ENCODE measurements at regions of chr6 and their contacts with region 1.

Region 1: DNA sequence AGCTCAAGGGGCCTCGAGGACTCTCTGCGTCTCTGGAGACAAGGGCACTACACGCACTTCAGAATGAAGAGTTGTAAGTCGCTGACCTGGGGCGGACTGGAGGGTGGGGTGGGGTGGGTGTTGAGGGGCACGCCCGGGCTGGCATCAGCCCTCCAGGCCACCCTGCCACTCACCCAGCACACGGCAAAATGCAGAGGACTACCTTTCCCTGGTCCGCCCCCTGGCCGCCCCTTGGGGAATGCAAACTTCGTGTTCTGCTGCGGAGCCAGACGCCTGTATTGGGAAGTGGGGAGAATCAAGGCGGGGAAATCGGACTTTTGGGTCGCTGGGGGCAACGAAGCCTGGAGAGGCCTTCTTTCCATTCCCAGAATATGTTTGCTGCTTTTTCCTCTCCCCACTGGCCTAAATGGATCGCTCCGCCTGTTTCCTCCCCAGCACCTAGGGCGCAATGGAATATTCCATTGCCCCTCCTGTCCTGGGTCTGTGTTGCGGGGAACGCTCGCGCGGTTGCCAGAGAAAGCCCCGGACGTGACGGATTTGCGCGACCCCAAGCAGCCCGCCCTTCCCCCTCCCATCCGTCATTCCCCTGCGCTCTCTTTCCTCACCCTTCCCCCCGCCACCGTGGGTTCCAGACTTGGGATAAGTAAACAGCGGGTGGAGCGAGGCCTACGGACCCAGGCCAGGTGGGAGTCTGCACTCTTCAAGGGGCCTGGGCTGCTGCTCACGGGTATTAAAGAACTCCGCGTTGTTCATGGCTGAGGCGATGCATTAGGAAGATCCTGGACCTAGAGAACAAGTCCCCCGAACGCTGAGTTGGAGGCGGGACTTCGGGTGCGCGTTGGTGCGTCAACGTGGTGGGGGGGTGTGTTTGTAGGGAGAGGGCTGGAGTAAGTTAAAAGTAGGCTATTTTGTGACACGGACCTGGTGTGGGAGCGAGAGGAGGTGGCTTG is at the start of gene PPT2:
- DNase-seq: peak; percentile 94
- ATAC-seq: peak; percentile 88 to 91
- total RNA-seq, gene PPT2: 20.2 to 29.6 TPM

Region 2: DNA sequence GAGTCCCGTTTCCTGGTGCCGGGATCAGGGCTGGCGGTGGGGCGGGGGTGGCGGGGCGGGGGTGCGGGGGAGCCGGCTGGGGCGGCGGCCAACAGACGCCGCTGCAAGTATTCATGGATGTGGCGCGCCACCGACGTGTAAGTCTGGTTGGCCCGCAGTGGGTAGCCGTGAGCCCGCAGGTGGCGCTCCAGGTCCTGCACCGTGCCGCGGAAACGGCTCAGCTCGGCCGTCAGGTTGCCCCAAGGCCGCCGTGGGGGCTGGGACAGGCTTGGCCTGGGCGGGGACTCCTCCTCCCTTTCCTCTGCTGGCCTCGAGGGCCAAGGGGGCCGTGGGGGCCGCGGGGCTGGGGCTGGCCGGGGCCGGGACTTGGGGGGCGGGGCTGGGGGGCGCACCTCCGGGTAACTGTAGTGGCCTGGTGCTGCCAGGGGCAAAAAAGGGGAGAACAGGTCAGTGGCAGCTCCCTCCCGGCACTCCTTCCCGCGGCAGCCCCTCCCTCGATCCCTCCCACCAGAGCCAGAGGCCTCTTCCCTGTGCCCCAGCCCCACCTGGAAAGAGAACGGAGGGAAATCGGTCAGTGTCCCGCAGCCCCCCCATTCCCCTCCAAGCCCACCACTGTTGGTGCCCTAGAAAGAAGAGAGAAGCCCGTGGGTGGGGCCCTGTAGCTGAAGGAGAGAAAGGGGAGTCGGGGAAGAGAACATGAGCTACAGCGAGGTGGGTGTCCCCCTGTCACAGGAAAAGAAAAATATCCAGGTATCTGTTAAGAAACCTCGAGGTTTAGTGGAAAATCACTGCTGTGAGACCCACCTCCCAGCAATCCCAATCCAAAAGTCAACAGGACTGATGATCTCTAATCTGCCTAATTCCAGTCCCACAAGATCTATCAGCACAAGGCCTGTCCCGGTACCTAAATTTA is 66.0 kb before region 1 on chr6:
- intact Hi-C with region 1: loop called in 1 of 2 experiments (anchors 2 kb)
- DNase-seq: peak; percentile 93
- ATAC-seq: peak; percentile 86 to 92

Region 3: DNA sequence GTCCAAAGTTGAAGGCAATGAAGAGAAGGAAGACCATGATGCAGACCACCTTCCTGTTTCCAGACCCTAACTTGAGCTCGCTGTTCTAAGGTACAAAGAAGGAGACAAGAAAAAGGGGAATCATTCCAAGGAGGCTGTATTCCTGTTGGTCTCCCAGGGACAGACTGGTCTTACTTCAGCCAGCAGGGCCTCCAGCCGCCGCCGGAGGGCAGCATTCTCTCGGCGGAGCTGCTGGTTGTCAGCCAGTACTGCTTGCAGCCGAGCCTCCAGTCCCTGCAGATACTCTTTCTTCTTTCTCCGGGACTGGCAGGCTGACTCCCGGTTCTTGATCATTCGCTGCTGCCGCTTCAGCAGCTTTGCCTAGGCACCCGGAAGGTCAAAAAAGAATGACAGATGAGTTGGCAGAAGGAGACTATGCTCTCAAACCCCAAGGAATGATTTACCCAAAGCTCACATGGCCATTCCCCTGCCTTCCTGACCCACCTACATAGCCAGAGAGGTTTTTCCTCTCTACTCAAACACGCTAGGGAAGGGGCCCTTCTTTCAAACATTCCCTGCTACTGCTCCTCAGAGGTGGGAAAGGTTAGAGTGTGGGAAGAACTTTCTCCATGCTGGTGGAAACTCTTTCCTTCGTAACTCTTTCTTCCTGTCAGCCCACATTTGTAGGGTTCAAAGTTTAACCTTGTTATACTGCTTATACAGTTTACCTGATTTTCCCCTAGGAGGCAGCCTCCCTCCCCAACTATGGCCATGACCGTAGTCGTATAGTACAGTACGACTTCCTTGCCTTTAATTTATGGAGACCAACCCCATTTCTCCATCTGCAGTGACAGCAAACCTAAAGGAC is 34.8 kb before region 1 on chr6:
- intact Hi-C with region 1: loop called in 1 of 2 experiments (anchors 2 kb)
- DNase-seq: peak; percentile 87
- ATAC-seq: peak; percentile 66 to 83